H1 (cell line): ENCODE measurements at regions of chr5 and their contacts with region 1.

Region 1: GRCh38 chr5:140346348-140347101 is at the start of gene HBEGF:
- DNase-seq: peak; percentile 78 to 88
- H3K4me3 ChIP-seq: peak within 1 kb of the TSS; percentile 48 to 84 (median 77)
- H3K27ac ChIP-seq: no peak within 1 kb of the TSS
- H3K4me1 ChIP-seq: peaks cover 0 to 16% (median 6%) of the 10 kb centered on the region in 4 experiments; a peak in 5 of 7 replicates
- H3K27me3 ChIP-seq: peaks cover 0 to 11% (median 5%) of the 10 kb centered on the region in 4 experiments; a peak in 6 of 7 replicates
- CTCF ChIP-seq: peak; percentile 74 to 90 (median 79)
- EP300 ChIP-seq: peak in 1 of 2 experiments; percentile 46; a peak in 1 of 3 replicates
- POLR2A ChIP-seq: peak; percentile 87 to 90
- RAD21 ChIP-seq: peak; percentile 36 to 56
- total RNA-seq, gene HBEGF: 2.5 and 2.8 TPM in 2 replicates

Region 2: GRCh38 chr5:140261403-140262171 is 84.9 kb before region 1 on chr5:
- CTCF ChIA-PET with region 1: interaction called, 676 read pairs
- POLR2A ChIA-PET with region 1: interaction called, 15 read pairs
- DNase-seq: no peak
- H3K4me3 ChIP-seq: no peak overlapping the region
- H3K27ac ChIP-seq: no peak overlapping the region
- H3K4me1 ChIP-seq: peaks cover 0 to 2% (median 0%) of the 10 kb centered on the region in 4 experiments; a peak in 4 of 7 replicates
- H3K27me3 ChIP-seq: no peaks in the 10 kb centered on the region
- CTCF ChIP-seq: no peak
- EP300 ChIP-seq: no peak
- POLR2A ChIP-seq: no peak
- RAD21 ChIP-seq: no peak

Region 3: GRCh38 chr5:140322751-140323731 is 23.5 kb before region 1 on chr5:
- CTCF ChIA-PET with region 1: interaction called, 45 read pairs
- POLR2A ChIA-PET with region 1: interaction called, 13 read pairs
- DNase-seq: no peak
- H3K4me3 ChIP-seq: no peak overlapping the region
- H3K27ac ChIP-seq: no peak overlapping the region
- H3K4me1 ChIP-seq: peaks cover 0 to 5% (median 0%) of the 10 kb centered on the region in 4 experiments; a peak in 3 of 7 replicates
- H3K27me3 ChIP-seq: no peaks in the 10 kb centered on the region
- CTCF ChIP-seq: no peak
- EP300 ChIP-seq: no peak
- POLR2A ChIP-seq: no peak
- RAD21 ChIP-seq: no peak

Region 4: DNA sequence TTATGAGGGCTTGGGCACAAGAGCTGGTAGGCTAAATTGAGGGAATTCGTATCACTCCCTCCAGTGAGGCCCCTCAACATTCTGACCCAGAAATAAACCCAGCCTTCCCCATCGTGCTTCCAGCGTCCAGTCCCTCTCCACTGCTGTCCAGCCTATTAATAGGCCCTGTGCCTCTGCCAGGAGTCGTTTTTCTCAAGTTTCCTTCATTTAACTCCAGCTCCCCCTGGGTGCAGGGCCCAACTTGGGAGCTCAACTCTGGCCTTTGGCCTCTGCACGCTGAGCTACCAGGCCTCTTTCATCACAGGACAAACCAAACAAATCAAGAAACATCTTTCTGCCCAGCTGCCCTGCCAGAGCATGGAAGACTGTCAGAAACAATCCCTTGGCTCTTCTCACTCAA is 10.1 kb before region 1 on chr5:
- CTCF ChIA-PET with region 1: interaction called, 45 read pairs
- POLR2A ChIA-PET with region 1: interaction called, 22 read pairs
- DNase-seq: no peak
- H3K4me3 ChIP-seq: no peak overlapping the region
- H3K27ac ChIP-seq: no peak overlapping the region
- H3K4me1 ChIP-seq: no peaks in the 10 kb centered on the region
- H3K27me3 ChIP-seq: no peaks in the 10 kb centered on the region
- CTCF ChIP-seq: no peak
- EP300 ChIP-seq: no peak
- POLR2A ChIP-seq: no peak
- RAD21 ChIP-seq: no peak

Region 5: DNA sequence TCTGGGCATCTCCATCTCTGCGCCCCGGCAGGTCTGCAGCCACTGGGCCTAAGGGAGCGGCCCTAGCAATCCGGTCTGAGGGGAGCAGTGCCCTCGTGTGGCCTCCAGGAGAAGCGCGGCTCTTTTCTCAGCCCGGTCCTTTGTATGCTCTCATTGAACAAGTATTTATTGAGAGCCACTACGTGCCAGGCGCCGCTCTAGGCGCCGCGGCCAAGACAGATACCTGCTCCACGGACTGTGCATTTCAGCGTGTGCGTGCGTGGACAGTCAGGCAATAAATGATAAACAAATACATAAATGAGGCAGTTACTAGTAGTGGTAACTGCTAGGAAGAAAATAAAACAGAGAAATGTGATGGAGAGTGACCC is 11.2 kb after region 1 on chr5:
- CTCF ChIA-PET with region 1: interaction called, 45 read pairs
- POLR2A ChIA-PET with region 1: interaction called, 18 read pairs
- DNase-seq: peak; percentile 75 to 88
- H3K4me3 ChIP-seq: no peak overlapping the region
- H3K27ac ChIP-seq: no peak overlapping the region
- H3K4me1 ChIP-seq: peaks cover 0 to 5% (median 0%) of the 10 kb centered on the region in 4 experiments; a peak in 2 of 7 replicates
- H3K27me3 ChIP-seq: no peaks in the 10 kb centered on the region
- CTCF ChIP-seq: peak in 2 of 3 experiments; percentile 92 to 93; a peak in 3 of 4 replicates
- EP300 ChIP-seq: no peak
- POLR2A ChIP-seq: no peak
- RAD21 ChIP-seq: peak; percentile 76 to 85

Region 6: DNA sequence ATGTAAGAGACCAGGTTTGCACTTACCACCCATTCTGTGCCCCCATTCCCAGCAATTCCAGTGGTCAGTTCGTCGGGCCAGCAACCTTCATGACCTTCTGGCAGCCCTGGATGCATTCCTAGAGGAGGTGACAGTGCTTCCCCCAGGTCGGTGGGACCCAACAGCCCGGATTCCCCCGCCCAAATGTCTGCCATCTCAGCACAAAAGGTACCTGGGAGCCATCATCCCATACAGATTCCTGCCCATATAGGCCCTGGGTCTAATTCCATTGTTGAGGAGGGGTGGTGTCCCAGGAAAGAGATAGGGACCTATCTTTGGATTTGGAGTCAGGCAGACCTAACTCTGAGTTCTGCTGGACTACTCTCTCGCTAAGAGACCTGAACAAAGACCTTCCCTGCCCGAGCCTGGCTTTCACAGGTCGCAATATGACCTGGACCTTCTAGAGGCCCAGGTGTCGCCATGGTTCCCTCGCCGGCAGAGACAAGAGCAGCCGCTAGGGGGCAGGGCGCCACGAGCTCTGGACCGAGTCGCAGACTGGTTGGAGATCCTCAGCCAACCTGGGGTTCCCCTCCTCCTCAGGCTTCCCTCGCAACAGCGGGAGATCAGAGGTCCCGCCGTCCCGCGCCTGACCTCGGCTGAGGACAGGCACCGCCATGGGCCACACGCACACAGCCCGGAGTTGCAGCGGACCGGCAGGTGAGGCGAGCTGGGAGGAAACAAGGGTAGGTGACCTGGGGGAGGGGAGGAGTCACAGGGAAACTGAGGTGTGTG is 16.5 kb after region 1 on chr5:
- CTCF ChIA-PET with region 1: interaction called, 45 read pairs
- POLR2A ChIA-PET with region 1: interaction called, 18 read pairs
- DNase-seq: peak in 1 of 2 experiments; percentile 99
- H3K4me3 ChIP-seq: peak overlapping the region; percentile 41 to 70 (median 62)
- H3K27ac ChIP-seq: no peak overlapping the region; the same call in 1 of the 2 replicates
- H3K4me1 ChIP-seq: peaks cover 0 to 8% (median 2%) of the 10 kb centered on the region in 4 experiments; a peak in 3 of 7 replicates
- H3K27me3 ChIP-seq: peaks cover 0 to 7% (median 2%) of the 10 kb centered on the region in 4 experiments; a peak in 2 of 7 replicates
- CTCF ChIP-seq: peak in 2 of 3 experiments; percentile 93 to 99; a peak in 3 of 4 replicates
- EP300 ChIP-seq: 0 out of 3 replicates have a peak, but pooled peaks of 1 of the 2 experiments have one; percentile 60
- POLR2A ChIP-seq: peak in 1 of 2 experiments; percentile 62; a peak in 2 of 3 replicates
- RAD21 ChIP-seq: peak; percentile 64 to 77

Region 7: GRCh38 chr5:140401362-140402257 is 55.1 kb after region 1 on chr5 and contains the start of gene ANKHD1:
- CTCF ChIA-PET with region 1: no interaction called
- POLR2A ChIA-PET with region 1: interaction called, 10 read pairs
- DNase-seq: peak; percentile 91 to 99
- H3K4me3 ChIP-seq: peak within 1 kb of the TSS; percentile 94 to 100 (median 97)
- H3K27ac ChIP-seq: peak within 1 kb of the TSS; percentile 92
- H3K4me1 ChIP-seq: peaks cover 0 to 9% (median 5%) of the 10 kb centered on the region in 4 experiments; a peak in 5 of 7 replicates
- H3K27me3 ChIP-seq: no peaks in the 10 kb centered on the region
- CTCF ChIP-seq: no peak
- EP300 ChIP-seq: no peak
- POLR2A ChIP-seq: peak; percentile 29 to 90
- RAD21 ChIP-seq: no peak
- total RNA-seq, gene ANKHD1: 101 and 108 TPM in 2 replicates

Region 8: DNA sequence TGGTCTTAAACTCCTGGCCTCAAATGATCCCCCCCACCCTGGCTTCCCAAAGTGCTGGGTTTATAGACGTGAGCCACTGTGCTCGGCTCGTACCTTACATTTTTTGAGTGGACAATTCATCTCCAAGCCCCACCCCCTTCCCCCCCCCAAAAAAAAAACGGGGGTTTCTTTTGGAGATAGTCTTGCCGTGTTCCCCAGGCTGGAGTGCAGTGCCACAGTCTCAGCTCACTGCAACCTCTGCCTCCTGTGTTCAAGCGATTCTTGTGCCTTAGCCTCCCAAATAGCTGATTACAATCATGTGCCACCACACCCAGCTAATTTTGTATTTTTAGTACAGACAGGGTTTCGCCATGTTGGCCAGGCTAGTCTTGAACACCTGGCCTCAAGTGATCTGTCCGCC is 86.4 kb after region 1 on chr5:
- CTCF ChIA-PET with region 1: no interaction called
- POLR2A ChIA-PET with region 1: no interaction called
- DNase-seq: no peak
- H3K4me3 ChIP-seq: no peak overlapping the region
- H3K27ac ChIP-seq: no peak overlapping the region
- H3K4me1 ChIP-seq: no peaks in the 10 kb centered on the region
- H3K27me3 ChIP-seq: no peaks in the 10 kb centered on the region
- CTCF ChIP-seq: no peak
- EP300 ChIP-seq: no peak
- POLR2A ChIP-seq: no peak
- RAD21 ChIP-seq: no peak

Region 9: GRCh38 chr5:140710899-140711552 is 364.5 kb after region 1 on chr5:
- CTCF ChIA-PET with region 1: no interaction called
- POLR2A ChIA-PET with region 1: no interaction called
- DNase-seq: peak; percentile 74 to 85
- H3K4me3 ChIP-seq: peak overlapping the region; percentile 63 to 78 (median 70)
- H3K27ac ChIP-seq: no peak overlapping the region
- H3K4me1 ChIP-seq: no peaks in the 10 kb centered on the region
- H3K27me3 ChIP-seq: no peaks in the 10 kb centered on the region
- CTCF ChIP-seq: no peak
- EP300 ChIP-seq: no peak
- POLR2A ChIP-seq: peak in 1 of 2 experiments; percentile 64; a peak in 2 of 3 replicates
- RAD21 ChIP-seq: no peak